Heart left ventricle (tissue), 16 donors: ENCODE measurements at regions of chr15 and their contacts with region 1.

Region 1: DNA sequence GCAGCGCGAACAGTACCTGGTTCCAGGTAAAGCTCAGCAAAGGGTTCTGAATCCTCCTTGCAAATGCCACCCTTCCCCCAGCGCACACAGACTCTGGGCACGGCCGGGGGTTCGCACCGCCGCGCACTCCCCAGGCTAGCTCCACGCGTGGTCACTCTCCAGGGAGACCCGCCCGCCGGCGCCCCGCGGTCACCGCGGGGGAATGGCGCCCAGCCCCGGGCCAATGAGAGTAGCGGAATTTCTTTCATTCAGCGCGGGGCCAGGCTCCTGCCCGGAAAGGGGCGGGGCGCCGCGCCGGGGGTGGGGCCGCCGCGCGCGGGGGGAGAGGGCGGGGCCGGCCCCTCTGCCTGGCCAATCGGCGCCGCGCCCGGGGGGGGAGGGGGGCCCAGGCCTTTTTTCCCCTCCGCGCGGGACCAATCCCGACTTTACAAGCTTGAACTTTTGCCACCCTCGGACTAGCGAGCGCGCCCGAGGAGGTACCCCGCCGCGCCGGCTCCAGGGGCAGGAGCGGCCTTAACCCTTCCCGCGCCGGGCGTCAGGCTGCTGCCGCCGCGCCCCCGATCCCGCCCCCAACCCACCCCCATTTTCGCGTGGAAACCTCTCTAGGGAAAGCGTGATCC is 1.1 kb upstream of the SMAD6 start:
- DNase-seq: peak; percentile 96 to 97 (median 97)
- ATAC-seq: peak; percentile 62 to 82 (median 78)
- H3K4me3 ChIP-seq: peak overlapping the region; percentile 50 to 90 (median 74)
- H3K27ac ChIP-seq: peak overlapping the region; percentile 45 to 95 (median 90)
- H3K4me1 ChIP-seq: peaks cover 0 to 47% (median 26%) of the 10 kb centered on the region in 12 donors
- H3K27me3 ChIP-seq: peaks cover 0 to 27% (median 0%) of the 10 kb centered on the region in 9 donors
- CTCF ChIP-seq: no peak
- POLR2A ChIP-seq: peak in 1 of 2 donors; percentile 48

Region 2: DNA sequence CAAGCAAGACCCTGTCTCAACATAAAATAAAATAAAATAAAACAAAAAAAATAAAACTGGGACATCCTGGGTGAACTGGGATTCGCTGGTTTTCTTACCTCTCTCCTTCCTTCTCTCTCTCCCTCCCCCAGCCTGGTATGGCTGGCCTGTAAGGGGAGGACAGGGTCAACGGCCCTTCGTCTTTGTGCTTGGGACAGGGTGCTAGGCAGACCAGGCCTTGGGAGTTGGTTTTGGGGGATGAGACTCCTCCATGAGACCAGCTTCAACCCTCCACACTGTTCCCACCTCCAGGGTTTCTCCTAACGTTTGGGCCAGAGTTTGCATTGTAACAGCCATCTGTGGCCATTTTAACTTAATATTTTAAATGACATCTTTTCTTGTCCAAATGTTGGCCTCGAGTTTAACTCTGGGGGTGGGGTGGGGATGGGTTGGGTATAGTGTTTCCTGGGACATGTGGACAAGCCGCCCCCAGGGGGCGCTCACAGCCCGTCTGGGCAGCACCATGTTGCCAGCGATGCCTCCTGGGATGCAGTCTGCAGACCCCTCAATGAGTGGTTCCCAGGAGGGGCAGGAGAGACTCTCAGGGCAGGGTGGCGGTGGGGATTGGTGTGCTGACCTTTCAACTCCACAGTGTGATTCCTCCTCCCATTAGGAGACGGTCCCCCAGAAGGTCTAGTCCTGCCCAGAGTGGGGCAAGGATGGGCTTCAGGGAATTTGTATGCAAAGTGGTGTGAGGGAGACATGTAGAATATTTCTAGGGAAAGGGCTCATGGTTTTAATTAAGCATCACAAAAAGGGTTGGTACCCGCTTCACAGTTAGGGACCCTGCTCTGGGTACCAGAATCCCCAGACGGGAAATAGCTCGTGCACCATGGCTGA is 97.4 kb before region 1 on chr15:
- intact Hi-C with region 1: loop called in 3 of 10 experiments (anchors 5 kb)
- DNase-seq: peak; percentile 58 to 83 (median 65)
- ATAC-seq: peak; percentile 52 to 90 (median 79)
- H3K4me3 ChIP-seq: no peak overlapping the region
- H3K27ac ChIP-seq: no peak overlapping the region
- H3K4me1 ChIP-seq: peaks cover 0 to 6% (median 0%) of the 10 kb centered on the region in 12 donors
- H3K27me3 ChIP-seq: no peaks in the 10 kb centered on the region
- CTCF ChIP-seq: peak; percentile 66 to 87 (median 82)
- POLR2A ChIP-seq: no peak

Region 3: DNA sequence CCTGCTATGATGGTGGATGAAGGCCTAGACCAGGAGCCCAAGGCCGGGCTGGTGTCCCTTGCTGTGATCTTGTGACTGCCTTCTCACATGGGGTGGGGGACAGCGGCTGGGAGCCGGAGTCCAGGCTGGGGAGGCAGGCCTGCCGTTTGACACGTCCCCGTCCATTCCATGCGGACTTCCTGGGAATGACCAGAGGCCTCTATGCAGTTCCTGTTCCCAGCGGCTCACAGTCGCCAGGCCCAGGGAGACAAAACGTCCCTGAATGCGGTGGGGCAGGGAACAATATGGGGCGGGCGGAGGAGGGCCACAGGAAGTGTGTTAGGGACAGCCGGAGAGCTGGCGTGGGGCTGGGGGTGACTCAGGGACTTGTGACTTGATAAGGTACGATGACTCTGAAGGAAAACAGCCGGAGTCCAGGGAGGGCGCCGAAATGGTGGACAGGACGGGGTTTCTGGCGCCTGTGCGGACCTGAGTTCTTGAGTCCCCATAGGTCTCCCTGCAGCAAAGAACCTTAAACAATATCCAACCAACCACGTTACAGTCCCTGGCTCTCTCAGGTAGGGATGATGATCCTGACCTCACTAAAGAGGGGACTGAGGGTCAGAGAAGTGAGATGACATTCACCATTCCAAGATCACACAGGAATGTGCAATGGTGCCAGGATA is 39.3 kb before region 1 on chr15:
- intact Hi-C with region 1: loop called in 3 of 10 experiments (anchors 5 kb)
- DNase-seq: peak; percentile 64 to 84 (median 82)
- ATAC-seq: peak; percentile 82 to 95 (median 88)
- H3K4me3 ChIP-seq: no peak overlapping the region
- H3K27ac ChIP-seq: peak overlapping the region; percentile 50 to 94 (median 86)
- H3K4me1 ChIP-seq: peaks cover 0 to 50% (median 11%) of the 10 kb centered on the region in 12 donors
- H3K27me3 ChIP-seq: no peaks in the 10 kb centered on the region
- CTCF ChIP-seq: no peak
- POLR2A ChIP-seq: peak in 1 of 2 donors; percentile 32

Region 4: DNA sequence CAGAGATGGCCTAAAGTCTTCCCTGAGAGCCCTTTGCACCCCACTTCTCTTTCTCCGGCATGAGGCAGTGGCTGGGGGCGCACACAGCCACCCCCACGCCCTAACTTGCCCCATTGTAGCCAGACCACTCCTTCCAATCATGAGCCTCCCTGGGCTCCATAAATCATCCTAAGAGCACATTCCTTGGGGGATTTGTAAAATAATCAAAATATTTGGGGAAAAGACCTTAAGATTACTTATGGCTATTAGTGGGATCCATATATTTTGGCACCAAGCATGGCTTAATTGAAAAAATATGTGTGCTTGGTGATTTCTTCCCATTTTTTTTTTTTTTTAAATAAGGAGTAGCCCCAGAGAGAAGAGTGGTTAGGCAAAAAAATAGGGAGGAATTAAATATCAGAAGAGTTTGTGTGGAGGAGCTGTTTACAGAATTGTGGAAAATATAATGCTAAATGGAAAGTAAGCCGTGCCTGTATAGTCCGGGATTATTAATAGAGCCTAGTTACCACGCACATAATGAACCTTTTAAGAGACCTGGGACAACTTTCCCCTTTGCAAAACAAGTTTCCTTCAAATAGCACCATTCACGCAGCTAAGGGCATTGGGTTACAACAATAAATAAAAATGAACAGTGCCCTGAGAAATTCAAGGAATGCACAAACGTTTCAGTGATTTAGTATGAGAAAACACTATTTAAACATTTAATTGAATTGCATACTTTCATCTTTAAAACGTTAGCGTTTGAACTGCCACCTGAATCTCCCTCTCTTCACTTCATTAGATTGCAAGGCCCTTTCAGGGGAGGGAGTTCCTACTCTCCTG is 47.2 kb after region 1 on chr15:
- intact Hi-C with region 1: loop called in 2 of 10 experiments (anchors 2 to 5 kb)
- DNase-seq: no peak
- ATAC-seq: no peak
- H3K4me3 ChIP-seq: no peak overlapping the region
- H3K27ac ChIP-seq: peak overlapping the region in 5 of 12 donors; percentile 11 to 76 (median 31)
- H3K4me1 ChIP-seq: peaks cover 0 to 100% (median 86%) of the 10 kb centered on the region in 12 donors
- H3K27me3 ChIP-seq: no peaks in the 10 kb centered on the region
- CTCF ChIP-seq: no peak
- POLR2A ChIP-seq: no peak

Region 5: GRCh38 chr15:66774001-66774814 is 73.3 kb after region 1 on chr15:
- intact Hi-C with region 1: loop called in 9 of 10 experiments (anchors 1 to 5 kb)
- DNase-seq: peak; percentile 85 to 91 (median 87)
- ATAC-seq: peak; percentile 89 to 95 (median 93)
- H3K4me3 ChIP-seq: no peak overlapping the region
- H3K27ac ChIP-seq: peak overlapping the region; percentile 16 to 79 (median 65)
- H3K4me1 ChIP-seq: peaks cover 0 to 83% (median 39%) of the 10 kb centered on the region in 12 donors
- H3K27me3 ChIP-seq: no peaks in the 10 kb centered on the region
- CTCF ChIP-seq: peak; percentile 89 to 99 (median 96)
- POLR2A ChIP-seq: no peak

Region 6: GRCh38 chr15:66851226-66852071 is 150.5 kb after region 1 on chr15:
- intact Hi-C with region 1: loop called in 9 of 10 experiments (anchors 2 to 10 kb)
- DNase-seq: peak; percentile 86 to 93 (median 90)
- ATAC-seq: peak; percentile 78 to 93 (median 91)
- H3K4me3 ChIP-seq: peak overlapping the region in 5 of 12 donors; percentile 3 to 33 (median 19)
- H3K27ac ChIP-seq: peak overlapping the region in 11 of 12 donors; percentile 68 to 87 (median 82)
- H3K4me1 ChIP-seq: peaks cover 0 to 36% (median 27%) of the 10 kb centered on the region in 12 donors
- H3K27me3 ChIP-seq: no peaks in the 10 kb centered on the region
- CTCF ChIP-seq: peak; percentile 95 to 99 (median 98)
- POLR2A ChIP-seq: no peak